ENCODE measurements at regions of chr10 and their contacts with region 1.

Region 1: GRCh38 chr10:68560186-68560942 is at the start of gene TET1:
- DNase-seq: peak in 6 of 7 donors; percentile 24 to 62 (median 33)
- H3K4me3 ChIP-seq: peak within 1 kb of the TSS in 3 of 4 donors; percentile 41 to 82 (median 54)
- H3K27ac ChIP-seq: no peak within 1 kb of the TSS
- H3K4me1 ChIP-seq: peaks cover 0 to 10% of the 10 kb centered on the region in 2 donors
- H3K27me3 ChIP-seq: peaks cover 3% of the 10 kb centered on the region
- CTCF ChIP-seq: no peak
- POLR2A ChIP-seq: no peak
- total RNA-seq, gene TET1: 0.91 to 10.0 (median 1.7) TPM

Region 2: DNA sequence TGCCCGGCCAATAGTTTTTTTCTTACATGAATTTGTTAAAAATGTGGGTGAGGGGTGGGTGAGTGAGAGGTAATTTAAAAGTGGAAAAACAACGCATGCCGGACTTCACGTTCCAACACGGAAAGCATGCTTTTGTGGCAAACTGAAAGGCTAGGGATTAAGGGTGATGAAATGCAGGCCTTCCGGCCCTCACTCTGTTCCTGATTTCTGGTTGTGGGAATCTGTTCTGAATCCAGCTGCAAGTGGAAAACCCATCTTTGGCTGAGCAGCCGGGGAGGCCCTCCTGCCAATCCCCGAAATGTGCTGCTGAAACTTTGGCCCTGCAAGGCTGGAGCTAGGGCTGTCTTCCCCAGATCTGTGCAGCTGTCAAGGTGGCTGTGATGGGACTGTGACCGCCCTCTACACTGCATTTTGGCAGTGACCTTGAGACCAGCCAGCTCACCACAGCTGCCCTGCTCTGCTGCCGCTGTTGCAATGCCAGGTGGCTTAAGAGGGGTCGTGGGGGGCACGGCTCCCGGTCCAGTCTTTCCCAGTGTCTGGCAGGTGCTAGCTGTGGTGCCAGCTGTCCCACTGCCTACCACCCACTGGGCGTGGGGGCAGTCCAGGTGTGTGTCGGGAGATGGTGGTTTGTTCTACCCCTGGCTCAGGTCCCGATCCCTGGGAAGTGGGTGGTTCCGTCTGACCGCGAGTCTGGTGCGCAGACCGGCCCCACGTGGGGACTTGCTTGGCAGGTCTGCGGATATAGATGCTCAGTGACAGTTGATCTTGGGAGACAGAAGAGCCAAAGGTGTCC is 38.8 kb after region 1 on chr10:
- intact Hi-C with region 1: loop called in 1 of 2 experiments (anchors 5 kb)
- DNase-seq: peak; percentile 25 to 61 (median 31)
- H3K4me3 ChIP-seq: peak overlapping the region in 2 of 4 donors; percentile 20 to 62
- H3K27ac ChIP-seq: peak overlapping the region in 2 of 5 donors; percentile 46 to 53
- H3K4me1 ChIP-seq: peaks cover 20 to 26% of the 10 kb centered on the region in 2 donors
- H3K27me3 ChIP-seq: no peaks in the 10 kb centered on the region
- CTCF ChIP-seq: no peak
- POLR2A ChIP-seq: no peak